Naive thymus-derived CD8-positive, alpha-beta T cell (primary cell): ENCODE measurements at regions of chr21 and their contacts with region 1.

Region 1: GRCh38 chr21:42062236-42063022 is 8.7 kb upstream of the UMODL1 start:
- DNase-seq: peak; percentile 76 to 98 (median 96)
- ATAC-seq: peak; percentile 80 to 83
- H3K4me3 Mint-ChIP-seq: peak overlapping the region; percentile 88 to 97 (median 94)
- H3K27ac Mint-ChIP-seq: peak overlapping the region; percentile 97 to 100 (median 100)
- H3K4me1 Mint-ChIP-seq: peaks cover 32 to 80% (median 60%) of the 10 kb centered on the region in 4 donors
- H3K27me3 Mint-ChIP-seq: no peaks in the 10 kb centered on the region

Region 2: DNA sequence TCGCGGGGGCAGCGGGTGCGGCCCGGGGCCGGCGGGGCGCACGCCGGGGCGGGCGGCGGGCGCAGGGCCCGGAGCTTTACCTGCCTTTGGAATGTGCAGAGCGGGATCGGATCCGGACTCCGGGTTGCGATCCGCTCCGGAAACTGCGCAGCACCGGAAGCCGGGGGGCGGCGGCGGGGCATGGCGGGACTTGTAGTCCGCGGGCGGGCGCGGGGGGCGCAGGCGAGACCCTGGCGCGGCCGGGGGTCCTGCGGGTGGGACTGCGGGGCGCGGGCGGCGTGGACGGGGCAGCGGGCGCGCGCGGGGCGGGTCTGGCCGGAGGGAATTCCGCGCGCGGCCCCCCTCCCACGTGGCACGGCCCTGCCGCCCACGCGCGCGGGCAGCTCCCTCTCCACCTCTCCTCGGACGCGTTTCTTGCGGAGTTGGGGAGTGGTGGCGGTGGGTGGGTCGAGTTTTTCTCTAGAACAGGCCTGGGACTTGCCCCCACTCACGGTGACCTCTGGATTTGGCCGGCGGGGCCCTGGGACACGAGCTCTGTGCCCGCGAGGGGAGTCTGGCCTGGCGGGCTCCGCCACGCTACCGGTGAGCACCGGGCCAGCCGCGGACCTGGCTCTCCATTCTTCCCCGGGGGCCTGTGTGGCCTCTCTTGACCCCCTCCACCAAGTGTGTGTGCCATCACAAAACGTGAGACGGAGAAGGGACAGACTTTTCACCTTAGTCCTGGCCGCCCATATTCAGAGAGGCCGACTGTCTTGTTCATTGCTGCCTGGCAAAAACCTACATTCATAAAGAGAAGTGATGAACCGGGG is 183.0 kb before region 1 on chr21 and contains the start of gene PRDM15:
- POLR2A ChIA-PET with region 1: interaction called, 23 read pairs
- DNase-seq: peak; percentile 58 to 87 (median 78)
- ATAC-seq: peak; percentile 72 to 78
- H3K4me3 Mint-ChIP-seq: peak within 1 kb of the TSS; percentile 81 to 95 (median 91)
- H3K27ac Mint-ChIP-seq: peak within 1 kb of the TSS; percentile 88 to 97 (median 95)
- H3K4me1 Mint-ChIP-seq: peaks cover 14 to 44% (median 32%) of the 10 kb centered on the region in 4 donors
- H3K27me3 Mint-ChIP-seq: no peaks in the 10 kb centered on the region
- polyA plus RNA-seq, gene PRDM15: 0.77 to 2.9 (median 2.4) TPM

Region 3: GRCh38 chr21:41926117-41926806 is 136.2 kb before region 1 on chr21:
- POLR2A ChIA-PET with region 1: interaction called, 16 read pairs
- DNase-seq: peak in 6 of 10 donors; percentile 27 to 71 (median 49)
- ATAC-seq: peak; percentile 88 to 95
- H3K4me3 Mint-ChIP-seq: peak overlapping the region; percentile 89 to 96 (median 95)
- H3K27ac Mint-ChIP-seq: peak overlapping the region; percentile 96 to 100 (median 99)
- H3K4me1 Mint-ChIP-seq: peaks cover 20 to 86% (median 45%) of the 10 kb centered on the region in 4 donors
- H3K27me3 Mint-ChIP-seq: peaks cover 0 to 2% (median 0%) of the 10 kb centered on the region in 5 donors

Region 4: DNA sequence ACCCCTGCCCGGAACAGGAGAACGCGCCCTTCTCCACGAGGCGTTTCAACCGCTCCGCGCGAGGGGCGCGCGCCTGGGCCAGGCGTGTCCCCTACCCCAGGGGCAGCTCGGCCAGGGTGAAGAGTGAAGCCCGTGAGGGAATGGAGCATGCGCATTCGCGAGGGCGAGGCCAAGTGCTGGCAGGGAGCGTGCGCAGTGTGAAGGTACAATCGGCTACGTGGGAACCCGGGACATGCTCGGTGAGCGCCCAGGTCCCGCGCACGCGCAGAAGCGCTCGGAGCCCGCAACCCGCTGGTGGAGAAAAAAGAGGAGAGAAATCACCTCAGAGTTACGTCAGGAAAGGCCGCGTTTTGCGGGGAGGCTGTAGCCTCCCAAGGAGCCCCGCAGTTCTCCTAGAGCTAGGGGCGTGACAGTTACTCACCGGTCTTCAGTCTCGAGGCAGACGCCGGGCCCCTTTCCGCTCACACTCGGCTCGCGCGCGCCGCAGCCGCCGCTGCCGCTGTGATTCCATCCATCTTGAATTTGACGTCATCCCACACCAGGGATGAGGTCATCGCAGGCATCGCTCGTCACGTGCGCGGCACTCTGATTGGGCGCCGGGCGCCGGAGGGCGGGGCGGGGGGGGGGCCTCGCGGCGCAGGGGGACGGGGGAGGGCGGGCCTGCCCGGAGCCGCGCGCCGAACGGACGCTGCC is 52.5 kb before region 1 on chr21 and contains the start of gene ZBTB21:
- POLR2A ChIA-PET with region 1: interaction called, 209 read pairs
- DNase-seq: peak; percentile 96 to 99 (median 98)
- ATAC-seq: peak; percentile 76 to 82
- H3K4me3 Mint-ChIP-seq: peak within 1 kb of the TSS; percentile 81 to 100 (median 98)
- H3K27ac Mint-ChIP-seq: peak within 1 kb of the TSS; percentile 94 to 100 (median 100)
- H3K4me1 Mint-ChIP-seq: peaks cover 28 to 40% (median 37%) of the 10 kb centered on the region in 4 donors
- H3K27me3 Mint-ChIP-seq: peaks cover 0 to 4% (median 0%) of the 10 kb centered on the region in 5 donors
- polyA plus RNA-seq, gene ZBTB21: 4.2 to 6.3 (median 4.7) TPM

Region 5: DNA sequence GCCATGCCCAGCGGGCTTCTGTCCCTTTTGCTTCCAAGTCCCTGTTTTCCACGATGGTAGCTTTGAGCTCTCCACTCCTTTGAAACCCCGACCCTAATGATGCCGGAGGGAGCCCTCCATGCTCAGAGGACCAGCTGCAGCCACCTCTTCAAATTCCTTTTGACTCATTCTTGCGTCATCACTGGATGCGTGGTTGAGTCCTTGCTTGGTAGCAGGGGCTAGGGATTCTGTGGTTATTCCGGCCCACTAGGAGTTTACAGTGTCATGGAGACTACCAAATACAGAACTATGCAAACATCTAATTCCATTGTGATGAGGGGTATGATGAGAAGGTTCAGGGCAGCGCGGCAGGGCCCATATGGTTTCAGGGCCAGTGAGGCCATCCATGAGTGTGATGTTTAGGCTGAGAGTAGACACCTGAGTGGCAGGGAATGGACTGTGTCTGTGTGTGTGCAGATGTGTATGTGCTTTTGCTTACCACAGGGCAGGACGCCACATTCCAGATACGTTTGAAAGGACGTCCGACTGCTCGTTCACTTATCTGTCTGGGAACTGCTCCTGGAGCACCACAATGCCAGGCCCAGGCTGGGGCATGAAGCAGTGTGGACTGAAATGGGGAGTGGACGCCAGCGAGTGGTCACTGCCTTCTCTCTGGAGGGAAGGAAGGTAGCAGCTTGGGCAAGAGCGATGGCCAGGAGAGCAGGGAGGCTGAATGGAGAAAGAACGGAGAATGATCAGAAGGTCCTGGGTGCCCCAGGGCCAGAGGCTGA is 21.8 kb before region 1 on chr21:
- POLR2A ChIA-PET with region 1: interaction called, 10 read pairs
- DNase-seq: peak in 1 of 10 donors; percentile 34
- ATAC-seq: no peak
- H3K4me3 Mint-ChIP-seq: no peak overlapping the region
- H3K27ac Mint-ChIP-seq: peak overlapping the region in 5 of 10 donors; percentile 20 to 63 (median 35)
- H3K4me1 Mint-ChIP-seq: peaks cover 5 to 25% (median 17%) of the 10 kb centered on the region in 4 donors
- H3K27me3 Mint-ChIP-seq: no peaks in the 10 kb centered on the region

Region 6: DNA sequence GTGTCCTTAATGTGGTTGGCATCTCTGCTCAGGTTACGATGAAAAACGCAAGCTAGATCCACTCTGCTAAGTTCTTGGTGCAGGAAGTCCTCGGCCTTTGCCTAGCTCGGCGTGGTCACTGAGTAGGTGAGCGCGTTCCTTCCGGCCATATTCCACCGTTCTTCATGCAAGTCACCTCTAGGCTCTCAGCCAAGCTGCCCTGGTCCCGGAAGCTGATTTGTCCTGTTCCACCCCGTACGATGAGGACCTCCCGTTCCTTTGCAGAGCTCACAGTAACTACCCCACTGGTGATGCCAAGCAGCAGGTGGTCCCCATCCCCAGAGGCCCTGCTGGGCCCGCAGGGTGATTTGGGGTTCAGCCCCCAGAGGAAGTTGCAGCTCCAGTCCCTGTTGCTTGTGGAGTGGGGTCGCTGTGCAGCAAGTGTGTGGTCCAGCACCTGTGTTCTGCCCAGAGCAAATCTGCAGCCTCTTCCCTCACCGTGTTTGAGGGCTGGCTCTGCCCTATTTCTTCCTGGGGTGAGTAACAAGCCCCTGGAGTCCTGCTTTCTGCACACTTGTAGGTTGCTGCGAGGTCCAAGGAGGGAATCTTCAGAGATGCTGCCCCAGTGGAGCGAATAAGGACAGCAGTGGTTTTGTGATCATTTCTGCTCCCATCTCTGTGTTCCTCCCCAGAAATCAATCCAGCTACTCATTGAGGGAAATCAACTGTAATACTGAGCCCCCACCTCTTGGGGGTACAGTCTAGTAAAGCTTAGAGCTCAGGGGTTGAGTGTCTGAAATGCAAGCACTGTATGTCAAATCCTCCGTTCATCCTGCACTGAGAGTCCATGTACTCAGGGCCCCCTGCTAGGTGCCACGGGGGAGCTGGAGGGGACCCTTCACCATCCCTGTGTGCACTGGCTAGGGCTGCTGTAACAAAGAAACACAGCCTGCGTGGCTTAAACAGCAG is 11.0 kb after region 1 on chr21:
- POLR2A ChIA-PET with region 1: interaction called, 28 read pairs
- DNase-seq: no peak
- ATAC-seq: peak; percentile 20 to 44
- H3K4me3 Mint-ChIP-seq: peak overlapping the region in 9 of 10 donors; percentile 7 to 46 (median 37)
- H3K27ac Mint-ChIP-seq: peak overlapping the region in 5 of 10 donors; percentile 35 to 79 (median 49)
- H3K4me1 Mint-ChIP-seq: peaks cover 5 to 21% (median 16%) of the 10 kb centered on the region in 4 donors
- H3K27me3 Mint-ChIP-seq: peaks cover 0 to 6% (median 0%) of the 10 kb centered on the region in 5 donors

Region 7: DNA sequence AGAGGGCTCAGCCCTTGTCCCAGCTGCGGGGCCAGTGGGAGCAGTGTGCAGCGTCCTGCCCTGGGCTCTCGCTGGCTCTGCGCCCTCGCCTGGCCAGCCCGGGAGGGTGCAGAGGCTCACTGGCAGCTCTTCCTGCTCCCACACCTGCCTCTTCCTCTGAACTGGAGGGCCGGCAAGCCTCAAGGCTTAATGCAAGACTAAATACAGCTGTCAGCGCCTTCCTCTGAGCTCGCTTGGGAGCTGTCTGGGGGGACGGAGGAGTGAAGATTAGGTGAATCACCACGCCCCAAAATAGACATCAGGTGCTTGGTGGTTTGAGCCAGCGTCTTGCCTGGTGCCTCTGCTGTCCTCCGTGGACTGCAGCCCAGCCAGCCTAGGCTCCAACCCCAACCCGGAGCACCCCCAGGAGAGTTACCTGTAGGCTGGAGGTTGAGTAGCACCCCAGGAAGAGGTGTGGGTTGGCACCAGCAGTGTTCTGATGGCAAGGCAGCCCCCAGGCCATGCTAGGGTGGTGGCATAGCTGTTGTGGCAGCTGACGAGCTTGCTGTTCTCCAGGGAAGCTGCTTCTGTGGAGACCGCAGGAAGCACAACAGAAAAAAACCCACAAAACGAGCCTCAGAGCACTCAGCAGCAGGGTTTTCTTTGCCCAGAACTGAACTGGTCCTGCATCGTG is 45.6 kb after region 1 on chr21:
- POLR2A ChIA-PET with region 1: interaction called, 65 read pairs
- DNase-seq: peak; percentile 37 to 81 (median 64)
- ATAC-seq: peak; percentile 98 to 99
- H3K4me3 Mint-ChIP-seq: peak overlapping the region; percentile 58 to 82 (median 72)
- H3K27ac Mint-ChIP-seq: peak overlapping the region in 9 of 10 donors; percentile 23 to 89 (median 79)
- H3K4me1 Mint-ChIP-seq: peaks cover 7 to 15% (median 12%) of the 10 kb centered on the region in 4 donors
- H3K27me3 Mint-ChIP-seq: peaks cover 0 to 5% (median 0%) of the 10 kb centered on the region in 5 donors

Region 8: DNA sequence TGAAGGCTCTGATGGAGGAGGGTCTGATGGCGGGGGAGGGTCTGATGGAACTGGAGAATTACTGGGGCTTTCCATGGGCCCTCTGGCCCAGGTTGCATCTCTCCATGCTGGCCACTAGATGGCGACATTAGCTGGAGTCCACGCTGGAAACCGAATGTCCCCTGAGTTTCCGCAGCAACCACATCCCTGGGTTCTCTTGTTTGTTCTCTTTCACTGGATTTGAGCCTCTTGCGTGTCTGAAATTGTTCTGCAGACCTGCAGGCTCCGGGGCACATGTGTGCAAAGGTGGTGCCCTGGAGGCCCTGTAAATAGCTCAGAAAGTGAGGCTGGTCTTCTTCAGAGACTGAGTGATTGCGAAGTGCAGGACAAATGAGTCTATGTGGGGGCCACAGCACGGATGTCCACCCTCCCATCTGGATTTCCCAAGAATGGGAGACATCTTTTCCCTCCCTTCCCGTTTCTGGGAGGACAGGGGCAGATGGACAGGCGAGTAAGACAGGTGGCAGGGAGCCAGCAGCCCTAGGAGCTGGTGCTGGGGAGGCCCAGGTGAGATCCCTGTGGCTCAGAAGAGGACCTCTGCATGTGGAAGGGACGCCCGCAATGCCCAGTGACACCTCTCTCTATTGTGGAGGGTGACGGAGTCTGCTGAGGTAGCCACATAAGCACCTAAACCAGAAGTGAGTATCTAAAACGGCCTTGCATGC is 83.3 kb after region 1 on chr21:
- POLR2A ChIA-PET with region 1: no interaction called
- DNase-seq: peak; percentile 35 to 80 (median 70)
- ATAC-seq: peak; percentile 90 to 94
- H3K4me3 Mint-ChIP-seq: peak overlapping the region in 1 of 10 donors; percentile 26
- H3K27ac Mint-ChIP-seq: peak overlapping the region in 8 of 10 donors; percentile 18 to 90 (median 74)
- H3K4me1 Mint-ChIP-seq: peaks cover 6 to 19% (median 11%) of the 10 kb centered on the region in 4 donors
- H3K27me3 Mint-ChIP-seq: no peaks in the 10 kb centered on the region